Stomach (tissue), 19 donors: ENCODE measurements at regions of chr20 and their contacts with region 1.

Region 1: GRCh38 chr20:16517946-16518783 is 55.1 kb downstream of the KIF16B start:
- DNase-seq: peak; percentile 52 to 70
- H3K4me3 ChIP-seq: no peak overlapping the region
- H3K27ac ChIP-seq: no peak overlapping the region
- H3K4me1 ChIP-seq: no peaks in the 10 kb centered on the region
- H3K27me3 ChIP-seq: no peaks in the 10 kb centered on the region
- CTCF ChIP-seq: peak in 5 of 7 experiments; percentile 34 to 56 (median 42)
- EP300 ChIP-seq: no peak
- POLR2A ChIP-seq: no peak

Region 2: GRCh38 chr20:16701296-16701695 is 183.1 kb after region 1 on chr20:
- intact Hi-C with region 1: no loop called
- DNase-seq: peak; percentile 15 to 30
- H3K4me3 ChIP-seq: no peak overlapping the region
- H3K27ac ChIP-seq: no peak overlapping the region
- H3K4me1 ChIP-seq: no peaks in the 10 kb centered on the region
- H3K27me3 ChIP-seq: peaks cover 0 to 7% (median 0%) of the 10 kb centered on the region in 3 donors
- CTCF ChIP-seq: peak in 2 of 7 experiments; percentile 7 to 20
- EP300 ChIP-seq: no peak
- POLR2A ChIP-seq: no peak

Region 3: DNA sequence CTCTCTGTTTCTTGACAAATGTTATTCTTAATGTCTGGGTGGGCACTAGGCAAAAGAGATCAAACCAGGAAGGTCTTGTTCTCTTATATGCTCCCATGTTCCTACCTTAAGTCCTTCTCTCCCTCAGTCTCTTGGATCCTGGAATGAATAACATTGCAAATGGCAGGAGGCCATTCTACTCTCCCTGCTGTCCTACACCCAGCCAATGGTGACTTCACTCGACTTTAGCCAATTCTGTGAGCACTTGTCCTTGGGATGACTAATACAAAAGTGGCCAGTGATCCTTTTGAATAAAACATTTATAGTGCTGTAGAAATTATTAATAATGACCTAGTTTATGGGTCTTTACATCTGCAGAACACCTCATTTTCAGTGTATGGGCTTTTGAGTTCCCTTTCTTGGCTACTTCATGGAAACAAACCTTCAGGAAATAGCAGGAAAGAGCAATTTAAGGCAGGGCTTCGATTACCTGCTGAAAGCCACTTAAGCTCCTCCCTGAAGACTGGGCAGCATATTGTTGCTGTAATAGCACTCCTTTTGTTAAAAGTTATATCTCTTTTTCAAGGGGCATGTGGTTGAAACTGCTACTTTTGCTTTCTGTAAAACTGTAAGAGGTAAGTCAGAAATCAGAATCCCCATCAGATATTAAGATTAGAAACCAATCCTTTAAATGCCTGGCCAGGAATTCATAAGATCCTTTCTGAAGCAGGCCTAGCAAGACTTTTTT is 240.5 kb after region 1 on chr20:
- intact Hi-C with region 1: loop called (anchors 10 kb)
- DNase-seq: no peak
- H3K4me3 ChIP-seq: no peak overlapping the region
- H3K27ac ChIP-seq: no peak overlapping the region
- H3K4me1 ChIP-seq: peaks cover 0 to 10% (median 3%) of the 10 kb centered on the region in 4 donors
- H3K27me3 ChIP-seq: peaks cover 0 to 2% (median 0%) of the 10 kb centered on the region in 3 donors
- CTCF ChIP-seq: no peak
- EP300 ChIP-seq: no peak
- POLR2A ChIP-seq: no peak

Region 4: GRCh38 chr20:16865406-16865805 is 347.2 kb after region 1 on chr20:
- intact Hi-C with region 1: no loop called
- DNase-seq: no peak
- H3K4me3 ChIP-seq: no peak overlapping the region
- H3K27ac ChIP-seq: no peak overlapping the region
- H3K4me1 ChIP-seq: no peaks in the 10 kb centered on the region
- H3K27me3 ChIP-seq: no peaks in the 10 kb centered on the region
- CTCF ChIP-seq: no peak
- EP300 ChIP-seq: no peak
- POLR2A ChIP-seq: no peak